Activated T-helper 2 cell treated with anti-CD3 and anti-CD28 coated beads, Interferon-gamma antibody, Interleukin-2, Interleukin-4, amounts not matched to agents 10 μg/mL and 5 μg/mL and 100 μg/mL, durations not matched to agents 14 hours and 24 hours and 36 hours (primary cell): ENCODE measurements at regions of chr12 and their contacts with region 1.

Region 1: GRCh38 chr12:111444925-111445725 is 39.4 kb downstream of the SH2B3 start:
- DNase-seq: peak; percentile 86
- H3K4me3 Mint-ChIP-seq: peak overlapping the region; percentile 22
- H3K27ac Mint-ChIP-seq: peak overlapping the region; percentile 79
- H3K4me1 Mint-ChIP-seq: peaks cover 79% of the 10 kb centered on the region
- H3K27me3 Mint-ChIP-seq: no peaks in the 10 kb centered on the region

Region 2: GRCh38 chr12:111196532-111196931 is 248.6 kb before region 1 on chr12:
- intact Hi-C with region 1: no loop called
- DNase-seq: no peak
- H3K4me3 Mint-ChIP-seq: no peak overlapping the region
- H3K27ac Mint-ChIP-seq: no peak overlapping the region
- H3K4me1 Mint-ChIP-seq: no peaks in the 10 kb centered on the region
- H3K27me3 Mint-ChIP-seq: peaks cover 1% of the 10 kb centered on the region

Region 3: GRCh38 chr12:111434680-111435338 is 10.3 kb before region 1 on chr12:
- intact Hi-C with region 1: loop called (anchors 1 kb)
- DNase-seq: peak; percentile 80
- H3K4me3 Mint-ChIP-seq: peak overlapping the region; percentile 63
- H3K27ac Mint-ChIP-seq: peak overlapping the region; percentile 96
- H3K4me1 Mint-ChIP-seq: peaks cover 77% of the 10 kb centered on the region
- H3K27me3 Mint-ChIP-seq: no peaks in the 10 kb centered on the region

Region 4: DNA sequence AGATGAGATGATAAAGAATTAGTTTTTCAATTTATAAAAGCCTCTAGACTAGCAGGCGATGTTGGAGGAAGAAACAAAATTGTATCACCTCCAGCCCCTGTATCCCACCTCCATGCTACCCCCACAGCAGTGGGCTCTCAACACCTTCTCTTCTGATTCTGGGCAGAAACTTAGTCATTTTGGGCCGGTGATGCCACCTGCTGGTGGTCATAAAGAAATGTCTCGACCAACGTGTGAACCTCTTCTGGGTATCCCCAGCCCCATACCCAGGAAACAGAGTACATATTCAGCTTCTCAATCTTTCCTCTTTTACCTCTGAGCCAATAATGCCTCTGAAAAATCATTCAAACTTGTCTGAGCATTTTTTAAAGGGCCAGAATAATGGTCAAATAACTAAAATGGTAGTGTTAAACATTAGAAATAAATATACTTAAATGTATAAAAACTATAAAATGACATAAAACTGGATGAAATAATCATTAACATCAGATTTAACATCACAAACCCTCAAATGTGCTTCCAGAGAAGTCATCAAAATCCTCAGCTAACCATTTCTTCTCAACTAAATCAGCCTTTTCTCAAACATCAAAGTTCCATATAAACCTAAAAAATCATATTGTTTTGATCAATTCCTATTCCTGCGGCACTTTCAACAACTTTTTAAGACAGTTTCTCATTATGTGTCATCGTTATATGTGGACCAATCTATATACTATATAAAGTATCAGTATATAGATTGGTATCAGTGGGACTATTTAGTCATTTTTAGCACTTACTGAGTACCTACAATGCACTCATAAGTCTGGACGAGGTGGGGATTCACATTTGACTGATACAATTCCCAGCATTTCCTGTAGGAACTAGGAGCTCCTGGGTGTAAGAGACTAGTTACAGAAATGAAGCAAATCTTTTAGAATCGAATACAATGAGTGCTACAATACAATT is 84.6 kb after region 1 on chr12:
- intact Hi-C with region 1: loop called (anchors 5 kb)
- DNase-seq: peak; percentile 49
- H3K4me3 Mint-ChIP-seq: no peak overlapping the region
- H3K27ac Mint-ChIP-seq: peak overlapping the region; percentile 63
- H3K4me1 Mint-ChIP-seq: peaks cover 12% of the 10 kb centered on the region
- H3K27me3 Mint-ChIP-seq: no peaks in the 10 kb centered on the region

Region 5: GRCh38 chr12:111546758-111547383 is 101.7 kb after region 1 on chr12:
- intact Hi-C with region 1: loop called (anchors 1 kb)
- DNase-seq: no peak
- H3K4me3 Mint-ChIP-seq: peak overlapping the region; percentile 37
- H3K27ac Mint-ChIP-seq: peak overlapping the region; percentile 88
- H3K4me1 Mint-ChIP-seq: peaks cover 20% of the 10 kb centered on the region
- H3K27me3 Mint-ChIP-seq: no peaks in the 10 kb centered on the region

Region 6: GRCh38 chr12:111578274-111578970 is 133.3 kb after region 1 on chr12:
- intact Hi-C with region 1: no loop called
- DNase-seq: no peak
- H3K4me3 Mint-ChIP-seq: no peak overlapping the region
- H3K27ac Mint-ChIP-seq: peak overlapping the region; percentile 12
- H3K4me1 Mint-ChIP-seq: peaks cover 10% of the 10 kb centered on the region
- H3K27me3 Mint-ChIP-seq: no peaks in the 10 kb centered on the region